ENCODE measurements at regions of chr3 and their contacts with region 1.

Region 1: GRCh38 chr3:170221924-170222646 is at the start of gene PRKCI:
- DNase-seq: peak; percentile 65 to 93
- ATAC-seq: peak; percentile 91 to 95 (median 92)
- H3K4me3 ChIP-seq: peak within 1 kb of the TSS; percentile 57
- H3K4me3 Mint-ChIP-seq: peak within 1 kb of the TSS; percentile 94
- H3K27ac ChIP-seq: peak within 1 kb of the TSS; percentile 67
- H3K27ac Mint-ChIP-seq: peak within 1 kb of the TSS; percentile 74 to 89
- H3K4me1 ChIP-seq: peaks cover 13% of the 10 kb centered on the region
- H3K4me1 Mint-ChIP-seq: peaks cover 16 to 17% of the 10 kb centered on the region in 2 donors
- H3K27me3 ChIP-seq: no peaks in the 10 kb centered on the region
- H3K27me3 Mint-ChIP-seq: peaks cover 0 to 11% of the 10 kb centered on the region in 2 donors
- CTCF ChIP-seq: no peak
- total RNA-seq, gene PRKCI: 8.4 to 14.4 (median 11.1) TPM

Region 2: GRCh38 chr3:170180908-170181879 is 40.9 kb before region 1 on chr3 and contains the start of gene PHC3:
- intact Hi-C with region 1: loop called (anchors 2 kb)
- DNase-seq: peak; percentile 87 to 96
- ATAC-seq: peak; percentile 79 to 88 (median 83)
- H3K4me3 ChIP-seq: peak within 1 kb of the TSS; percentile 84
- H3K4me3 Mint-ChIP-seq: peak within 1 kb of the TSS; percentile 97
- H3K27ac ChIP-seq: peak within 1 kb of the TSS; percentile 97
- H3K27ac Mint-ChIP-seq: peak within 1 kb of the TSS; percentile 96 to 99
- H3K4me1 ChIP-seq: peaks cover 26% of the 10 kb centered on the region
- H3K4me1 Mint-ChIP-seq: peaks cover 30 to 35% of the 10 kb centered on the region in 2 donors
- H3K27me3 ChIP-seq: no peaks in the 10 kb centered on the region
- H3K27me3 Mint-ChIP-seq: no peaks in the 10 kb centered on the region
- CTCF ChIP-seq: no peak
- total RNA-seq, gene PHC3: 121 to 130 (median 125) TPM